ENCODE measurements at regions of chr10 and their contacts with region 1.

Region 1: DNA sequence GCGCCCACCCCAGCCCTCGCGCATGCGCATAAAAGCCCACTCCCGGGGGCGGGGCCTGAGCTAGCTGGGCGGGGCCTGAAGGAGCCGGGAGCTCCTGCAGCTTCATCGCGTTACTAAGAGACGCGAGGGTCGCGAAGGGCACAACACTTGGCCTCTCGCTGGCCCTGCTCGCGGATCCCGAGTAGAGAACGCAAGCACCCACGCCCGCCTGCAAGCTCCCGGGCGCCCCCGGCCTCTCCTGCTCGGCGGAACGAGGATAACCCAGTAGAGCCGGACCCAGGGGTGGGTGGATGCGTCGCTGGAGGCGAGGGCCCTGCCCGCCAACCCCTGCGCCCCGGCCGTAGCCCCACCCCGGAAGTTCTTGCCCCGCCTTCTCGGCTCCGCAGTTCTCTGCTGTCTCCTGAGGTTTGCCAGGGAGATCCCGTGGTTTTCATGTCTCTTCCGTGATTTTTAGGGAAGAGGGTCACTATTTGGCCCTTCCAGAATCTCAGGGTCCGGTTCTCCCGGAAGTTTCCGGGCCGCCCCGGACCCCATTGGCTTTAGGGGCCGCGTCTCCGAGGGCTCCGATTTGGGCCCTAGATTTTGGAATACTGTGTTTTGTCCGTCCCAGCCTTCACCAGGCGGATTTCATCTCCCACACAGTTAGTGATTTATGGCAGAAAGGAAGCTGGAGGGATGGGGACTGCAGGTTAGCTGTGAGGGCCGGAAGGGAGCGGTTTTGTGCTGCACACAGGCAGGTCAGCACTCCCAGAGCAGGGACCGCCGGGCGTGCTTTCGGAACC is at the start of gene MEIG1:
- DNase-seq: peak; percentile 95 to 96
- H3K4me3 ChIP-seq: peak within 1 kb of the TSS; percentile 62 to 97
- H3K27ac ChIP-seq: peak within 1 kb of the TSS; percentile 93 to 99
- H3K4me1 ChIP-seq: no peaks in the 10 kb centered on the region
- H3K27me3 ChIP-seq: no peaks in the 10 kb centered on the region
- CTCF ChIP-seq: no peak
- POLR2A ChIP-seq: peak; percentile 4 to 34
- total RNA-seq, gene MEIG1: not detected

Region 2: GRCh38 chr10:15106352-15107013 is 147.0 kb after region 1 on chr10:
- intact Hi-C with region 1: loop called (anchors 10 kb)
- DNase-seq: peak; percentile 50 to 52
- H3K4me3 ChIP-seq: no peak overlapping the region
- H3K27ac ChIP-seq: no peak overlapping the region
- H3K4me1 ChIP-seq: no peaks in the 10 kb centered on the region
- H3K27me3 ChIP-seq: no peaks in the 10 kb centered on the region
- CTCF ChIP-seq: peak; percentile 60 to 74 (median 72)
- POLR2A ChIP-seq: no peak

Measured in uterus (tissue), 4 donors.